Panc1 (cell line): ENCODE measurements at regions of chr10 and their contacts with region 1.

Region 1: DNA sequence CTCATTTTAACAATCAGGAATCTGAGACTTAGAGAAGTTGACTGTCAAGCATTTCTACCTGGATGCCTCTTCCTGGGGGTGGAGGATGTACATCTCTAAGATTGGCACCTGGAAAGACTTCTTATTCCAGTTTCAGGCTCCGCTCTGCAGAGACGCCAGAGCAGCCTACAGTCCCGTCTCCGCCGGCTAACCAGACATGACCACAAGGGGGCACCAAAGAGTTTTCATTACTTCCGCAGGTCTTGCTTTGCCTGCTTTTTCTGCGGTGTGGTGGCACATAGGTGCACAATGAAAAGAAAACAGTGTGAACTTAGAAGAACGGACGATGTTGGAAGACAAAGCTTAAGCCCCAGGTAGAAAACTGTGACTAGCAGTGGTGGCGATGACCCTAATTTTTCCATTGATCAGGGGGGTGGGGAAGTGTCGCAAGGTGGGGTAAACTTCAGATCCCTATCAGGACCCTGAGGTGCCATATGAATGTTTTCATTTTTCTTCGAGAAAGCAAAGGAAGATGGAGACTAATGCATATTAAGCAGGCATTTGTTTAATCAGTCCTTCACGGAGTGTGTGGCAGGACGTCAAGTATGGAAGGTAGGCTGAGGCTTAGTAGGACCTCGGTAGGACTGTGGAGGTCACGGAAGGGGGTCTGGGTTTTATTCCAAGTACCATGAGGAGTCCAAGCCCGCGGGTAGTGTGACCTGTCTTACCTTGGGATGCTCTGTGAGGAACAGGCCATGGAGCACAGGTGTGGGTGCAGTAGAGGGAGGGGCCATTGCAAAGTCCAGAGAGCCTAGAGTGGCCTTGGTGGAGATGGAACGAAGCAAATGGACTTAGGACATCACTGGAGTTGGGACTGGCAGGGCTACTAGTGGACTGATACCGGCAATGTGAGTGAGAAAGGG is 60.1 kb upstream of the SORCS3 start:
- DNase-seq: peak; percentile 47
- ATAC-seq: peak; percentile 95
- H3K4me3 ChIP-seq: no peak overlapping the region; a peak in 1 of 4 replicates
- H3K27ac ChIP-seq: no peak overlapping the region
- H3K4me1 ChIP-seq: no peaks in the 10 kb centered on the region
- H3K27me3 ChIP-seq: peaks cover 6% of the 10 kb centered on the region; the same call in 1 of the 2 replicates
- CTCF ChIP-seq: peak; percentile 95

Region 2: DNA sequence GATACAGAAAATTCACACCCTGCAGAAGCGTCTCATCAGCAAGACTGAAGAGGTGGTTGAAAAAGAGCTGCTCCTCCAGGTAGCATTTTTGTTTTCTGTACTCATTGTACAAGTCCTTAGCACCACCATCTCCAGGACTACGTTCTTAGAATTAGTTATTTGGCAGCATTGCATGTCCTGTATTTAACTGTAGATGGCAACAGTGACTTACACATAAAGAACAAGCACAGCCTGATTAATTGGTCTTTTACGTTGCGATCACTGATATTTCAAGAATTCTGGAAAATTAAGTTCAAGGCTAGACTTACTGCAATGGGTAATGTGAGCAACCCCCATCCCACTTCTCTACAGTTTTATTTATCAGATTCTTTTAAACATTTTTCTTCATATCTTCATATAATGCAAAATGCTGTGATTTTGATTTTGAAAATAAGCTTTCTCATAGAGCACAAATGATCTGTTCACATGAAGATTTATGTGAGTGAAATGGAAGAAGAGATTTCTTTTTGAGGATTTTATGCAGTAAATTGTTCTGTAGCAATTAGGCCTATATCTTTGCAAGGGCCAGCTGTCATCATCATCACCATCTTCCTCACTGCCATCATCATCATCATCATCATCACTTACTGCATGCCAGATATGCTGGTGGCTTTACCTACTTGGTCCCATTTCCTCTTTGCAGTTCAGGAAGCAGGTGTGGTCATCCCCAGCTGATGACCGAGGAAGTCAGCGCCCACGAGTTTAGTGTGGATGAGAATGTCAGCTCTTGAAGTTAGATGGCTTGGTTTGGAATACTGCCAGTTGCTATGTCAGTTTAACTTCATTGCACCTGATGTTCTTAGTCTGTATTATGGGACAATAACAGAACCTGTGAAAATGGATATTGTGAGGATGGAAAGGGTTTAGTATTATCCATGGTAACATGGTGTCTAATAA is 174.0 kb before region 1 on chr10:
- CTCF ChIA-PET with region 1: no interaction called
- POLR2A ChIA-PET with region 1: no interaction called
- in situ Hi-C with region 1: no loop called
- intact Hi-C with region 1: loop called (anchors 2 kb)
- DNase-seq: peak; percentile 18
- ATAC-seq: peak; percentile 91
- H3K4me3 ChIP-seq: no peak overlapping the region
- H3K27ac ChIP-seq: no peak overlapping the region
- H3K4me1 ChIP-seq: no peaks in the 10 kb centered on the region; the same call in 1 of the 2 replicates
- H3K27me3 ChIP-seq: peaks cover 16% of the 10 kb centered on the region
- CTCF ChIP-seq: peak; percentile 81

Region 3: GRCh38 chr10:104622598-104623209 is 41.7 kb after region 1 on chr10:
- CTCF ChIA-PET with region 1: no interaction called
- POLR2A ChIA-PET with region 1: no interaction called
- in situ Hi-C with region 1: no loop called
- intact Hi-C with region 1: loop called (anchors 2 kb)
- DNase-seq: no peak
- ATAC-seq: peak; percentile 75
- H3K4me3 ChIP-seq: no peak overlapping the region
- H3K27ac ChIP-seq: no peak overlapping the region
- H3K4me1 ChIP-seq: no peaks in the 10 kb centered on the region
- H3K27me3 ChIP-seq: peaks cover 5% of the 10 kb centered on the region; the same call in 1 of the 2 replicates
- CTCF ChIP-seq: peak; percentile 71

Region 4: GRCh38 chr10:104910712-104911111 is 329.7 kb after region 1 on chr10:
- CTCF ChIA-PET with region 1: no interaction called
- POLR2A ChIA-PET with region 1: no interaction called
- in situ Hi-C with region 1: no loop called
- intact Hi-C with region 1: loop called (anchors 10 kb)
- DNase-seq: no peak
- ATAC-seq: no peak
- H3K4me3 ChIP-seq: no peak overlapping the region
- H3K27ac ChIP-seq: no peak overlapping the region
- H3K4me1 ChIP-seq: no peaks in the 10 kb centered on the region
- H3K27me3 ChIP-seq: no peaks in the 10 kb centered on the region
- CTCF ChIP-seq: no peak